ENCODE measurements at regions of chr15 and their contacts with region 1.

Region 1: DNA sequence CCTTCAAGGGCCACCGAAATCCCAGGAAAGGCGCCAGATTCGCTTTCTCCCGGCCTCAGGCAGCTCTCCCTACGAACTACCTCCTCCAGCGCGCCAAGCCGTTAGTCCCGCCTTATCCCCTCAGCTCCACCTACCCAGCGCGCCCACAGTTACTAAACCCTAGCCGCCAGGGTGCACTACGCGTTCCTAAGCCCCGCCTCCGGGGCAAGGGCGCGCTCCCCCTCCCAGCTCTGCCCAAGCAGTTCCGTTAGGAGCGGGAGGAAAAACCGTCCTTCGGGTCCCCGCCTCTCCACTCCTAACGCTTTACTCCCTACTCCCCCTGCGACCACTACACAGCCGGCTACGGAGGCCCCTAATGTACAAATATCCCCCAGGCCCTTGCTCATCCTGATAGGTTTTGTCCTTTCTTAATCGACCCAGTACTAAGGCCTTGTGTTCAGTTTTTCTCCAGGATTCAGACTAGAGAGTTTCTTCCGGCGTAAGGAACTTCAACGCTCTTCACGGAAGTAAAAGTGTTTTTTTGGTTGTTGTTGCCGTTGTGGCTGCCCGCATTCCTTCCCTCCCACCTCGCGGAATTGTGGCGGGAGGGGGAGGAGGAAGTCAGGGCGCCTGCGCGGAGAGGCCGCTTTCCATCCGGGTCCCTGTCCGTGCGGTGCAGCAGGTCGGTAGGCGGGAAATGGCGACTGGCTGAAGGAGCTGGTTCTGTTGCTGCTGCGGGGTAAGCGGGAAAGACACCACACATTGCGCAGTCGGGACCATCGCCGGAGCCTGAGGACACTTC is at the start of gene CTDSPL2:
- DNase-seq: peak; percentile 85 to 96 (median 91)
- ATAC-seq: peak; percentile 94 to 98 (median 97)
- H3K4me3 ChIP-seq: peak within 1 kb of the TSS; percentile 66 to 82
- H3K4me3 Mint-ChIP-seq: peak within 1 kb of the TSS; percentile 98 to 100 (median 100)
- H3K27ac ChIP-seq: peak within 1 kb of the TSS; percentile 91
- H3K27ac Mint-ChIP-seq: peak within 1 kb of the TSS; percentile 99
- H3K4me1 ChIP-seq: peaks cover 13 to 23% of the 10 kb centered on the region in 2 experiments
- H3K4me1 Mint-ChIP-seq: peaks cover 40 to 62% (median 51%) of the 10 kb centered on the region in 3 donors
- H3K27me3 ChIP-seq: no peaks in the 10 kb centered on the region
- H3K27me3 Mint-ChIP-seq: peaks cover 0 to 2% of the 10 kb centered on the region in 2 donors
- total RNA-seq, gene CTDSPL2: 59.7 to 76.7 (median 71.0) TPM

Region 2: DNA sequence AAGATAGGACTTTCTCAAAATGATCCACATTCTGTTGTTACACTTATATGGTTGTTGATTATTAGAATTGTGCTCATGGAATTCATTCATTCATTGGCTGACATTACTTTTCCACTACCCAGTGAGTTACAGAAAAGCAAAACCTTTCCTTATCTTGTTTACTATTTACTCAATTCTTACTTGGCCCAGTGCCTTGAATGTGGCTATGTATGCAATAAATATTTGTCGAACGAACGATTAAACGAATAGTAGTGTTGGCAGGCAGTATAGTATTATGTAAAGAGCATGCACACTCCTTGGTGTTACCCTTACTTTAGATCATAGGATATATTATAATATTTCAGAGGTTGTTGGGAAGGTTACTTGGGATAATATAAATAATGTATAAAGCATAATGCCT is 31.3 kb after region 1 on chr15:
- CTCF ChIA-PET with region 1: interaction called in 1 of 2 experiments, 7 read pairs
- POLR2A ChIA-PET with region 1: interaction called in 1 of 2 experiments, 15 read pairs
- DNase-seq: no peak
- ATAC-seq: no peak
- H3K4me3 ChIP-seq: no peak overlapping the region
- H3K4me3 Mint-ChIP-seq: no peak overlapping the region
- H3K27ac ChIP-seq: no peak overlapping the region
- H3K27ac Mint-ChIP-seq: no peak overlapping the region
- H3K4me1 ChIP-seq: peaks cover 0 to 4% of the 10 kb centered on the region in 2 experiments
- H3K4me1 Mint-ChIP-seq: peaks cover 34 to 45% (median 43%) of the 10 kb centered on the region in 3 donors
- H3K27me3 ChIP-seq: no peaks in the 10 kb centered on the region
- H3K27me3 Mint-ChIP-seq: no peaks in the 10 kb centered on the region